ENCODE measurements at regions of chr2 and their contacts with region 1.

Region 1: DNA sequence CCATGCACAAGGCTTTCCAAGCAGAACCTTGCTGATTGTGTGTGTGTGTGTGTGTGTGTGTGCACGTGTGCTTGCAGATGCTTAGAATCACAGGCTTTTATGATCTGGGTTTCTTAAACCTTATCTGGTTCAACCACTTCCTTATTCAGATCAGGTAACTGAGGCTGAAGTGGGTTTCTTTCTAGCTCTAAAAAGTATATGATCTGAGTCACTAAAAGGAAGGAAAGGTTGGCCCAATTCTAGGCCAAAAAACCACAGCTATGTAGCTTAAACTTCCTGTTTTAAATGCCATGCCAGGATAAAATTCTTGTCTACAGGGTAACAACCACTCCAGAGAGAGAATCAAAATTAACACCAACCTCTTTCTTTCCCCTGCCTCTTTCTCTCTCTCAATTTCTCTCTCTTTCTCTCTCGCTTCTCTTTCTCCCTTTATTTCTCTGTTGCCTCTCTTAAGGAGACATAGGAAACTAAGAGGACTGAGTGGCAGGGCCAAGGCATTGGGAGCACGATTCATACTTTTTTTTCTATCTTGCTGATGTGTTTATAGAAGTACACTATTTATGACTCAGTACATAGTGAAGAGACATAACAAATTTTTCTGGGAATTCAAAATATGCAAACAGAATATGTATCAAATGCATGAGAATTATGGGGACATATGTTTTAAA is 140.3 kb downstream of the TRIB2 start:
- DNase-seq: peak; percentile 79
- H3K4me3 Mint-ChIP-seq: no peak overlapping the region
- H3K27ac Mint-ChIP-seq: no peak overlapping the region
- H3K4me1 Mint-ChIP-seq: peaks cover 27% of the 10 kb centered on the region
- H3K27me3 Mint-ChIP-seq: peaks cover 9% of the 10 kb centered on the region

Region 2: DNA sequence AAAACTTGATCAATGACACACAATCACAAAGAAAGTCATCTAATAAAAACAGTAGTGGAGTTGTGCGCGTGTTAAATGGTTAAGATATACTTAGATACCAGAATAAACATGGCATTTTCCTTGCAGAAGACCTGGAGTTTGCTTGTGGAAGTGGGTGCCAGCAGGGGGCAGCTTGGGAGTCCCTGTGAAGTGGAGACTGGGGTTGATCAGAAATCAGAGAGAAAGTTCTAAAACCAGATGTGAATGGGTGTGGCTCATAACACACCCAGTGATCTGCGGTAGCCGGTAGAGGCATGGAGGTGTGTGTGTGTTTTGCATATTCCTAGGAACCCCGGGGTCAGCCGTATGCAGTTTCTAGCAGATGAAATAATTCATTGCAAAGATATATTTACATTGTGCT is 440.5 kb before region 1 on chr2:
- intact Hi-C with region 1: loop called (anchors 10 kb)
- DNase-seq: peak; percentile 86
- H3K4me3 Mint-ChIP-seq: peak overlapping the region; percentile 4
- H3K27ac Mint-ChIP-seq: peak overlapping the region; percentile 25
- H3K4me1 Mint-ChIP-seq: peaks cover 54% of the 10 kb centered on the region
- H3K27me3 Mint-ChIP-seq: no peaks in the 10 kb centered on the region

Region 3: DNA sequence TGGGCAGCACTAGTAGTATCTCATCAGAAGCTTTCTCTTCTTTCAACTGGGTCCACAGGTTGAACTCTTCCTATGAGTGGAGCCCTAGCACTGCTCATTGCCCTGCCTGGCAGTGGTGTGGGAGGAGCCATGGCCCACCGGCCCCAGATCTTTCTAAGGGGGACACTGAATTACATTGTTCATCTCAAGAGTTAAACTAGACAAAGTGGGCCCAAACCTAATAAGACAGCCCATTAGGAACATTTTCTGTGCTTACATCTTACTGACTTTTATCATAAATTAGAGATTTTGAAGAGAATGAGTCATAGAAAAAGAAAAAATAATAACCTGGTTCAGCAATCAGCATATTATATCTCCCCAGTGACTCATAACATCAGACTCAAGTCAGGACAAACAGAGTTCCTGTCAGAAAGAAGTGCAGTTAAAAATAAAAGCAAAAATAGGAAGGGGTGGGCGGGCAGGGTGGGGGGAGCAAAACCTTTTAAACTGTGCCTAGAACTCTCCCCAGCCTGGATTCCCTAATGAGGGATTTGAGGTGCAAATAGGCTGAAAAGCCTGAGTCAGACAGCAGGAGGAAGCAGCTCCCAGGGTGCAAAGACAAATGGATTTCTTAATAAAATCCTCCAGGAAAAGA is 301.9 kb before region 1 on chr2:
- intact Hi-C with region 1: loop called (anchors 5 kb)
- DNase-seq: peak; percentile 59
- H3K4me3 Mint-ChIP-seq: peak overlapping the region; percentile 57
- H3K27ac Mint-ChIP-seq: peak overlapping the region; percentile 88
- H3K4me1 Mint-ChIP-seq: peaks cover 39% of the 10 kb centered on the region
- H3K27me3 Mint-ChIP-seq: no peaks in the 10 kb centered on the region

Region 4: GRCh38 chr2:12931186-12931844 is 74.2 kb after region 1 on chr2:
- intact Hi-C with region 1: loop called (anchors 2 kb)
- DNase-seq: peak; percentile 61
- H3K4me3 Mint-ChIP-seq: no peak overlapping the region
- H3K27ac Mint-ChIP-seq: no peak overlapping the region
- H3K4me1 Mint-ChIP-seq: peaks cover 11% of the 10 kb centered on the region
- H3K27me3 Mint-ChIP-seq: peaks cover 49% of the 10 kb centered on the region

Region 5: DNA sequence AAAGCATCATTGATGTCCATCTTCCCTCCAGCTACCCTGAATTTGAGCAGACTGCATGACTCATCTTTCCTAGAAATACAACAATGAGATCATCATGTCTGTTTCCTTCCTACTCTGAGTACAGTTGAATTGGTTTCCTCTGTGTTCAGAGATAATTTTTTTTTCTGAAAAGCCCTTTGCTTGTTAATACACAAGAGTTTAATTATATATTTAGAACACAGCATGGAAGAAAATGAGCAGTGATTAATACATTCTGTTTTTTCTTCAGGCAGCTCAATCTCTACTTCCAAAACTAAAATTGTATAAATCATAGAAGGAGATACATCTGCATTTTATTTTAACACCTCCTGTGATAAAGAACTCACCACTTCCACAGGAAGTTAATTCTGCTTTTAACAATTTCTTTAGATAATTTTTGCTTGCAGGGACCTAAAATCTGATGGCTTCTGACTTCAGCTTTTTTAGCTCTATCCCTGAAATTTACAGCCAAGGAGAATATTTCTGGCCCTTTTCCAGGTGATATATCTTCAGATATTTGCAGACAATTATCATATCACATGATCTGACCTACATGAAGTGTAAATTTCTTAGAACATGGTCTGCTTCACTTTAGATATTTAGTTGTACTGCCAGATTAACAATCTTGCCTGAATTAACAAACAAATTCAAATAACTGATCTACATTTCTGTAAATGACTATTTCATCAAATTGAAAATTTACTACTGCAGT is 108.6 kb after region 1 on chr2:
- intact Hi-C with region 1: loop called (anchors 5 kb)
- DNase-seq: peak; percentile 60
- H3K4me3 Mint-ChIP-seq: peak overlapping the region; percentile 21
- H3K27ac Mint-ChIP-seq: no peak overlapping the region
- H3K4me1 Mint-ChIP-seq: peaks cover 19% of the 10 kb centered on the region
- H3K27me3 Mint-ChIP-seq: peaks cover 16% of the 10 kb centered on the region